ENCODE measurements at regions of chr22 and their contacts with region 1.

Region 1: DNA sequence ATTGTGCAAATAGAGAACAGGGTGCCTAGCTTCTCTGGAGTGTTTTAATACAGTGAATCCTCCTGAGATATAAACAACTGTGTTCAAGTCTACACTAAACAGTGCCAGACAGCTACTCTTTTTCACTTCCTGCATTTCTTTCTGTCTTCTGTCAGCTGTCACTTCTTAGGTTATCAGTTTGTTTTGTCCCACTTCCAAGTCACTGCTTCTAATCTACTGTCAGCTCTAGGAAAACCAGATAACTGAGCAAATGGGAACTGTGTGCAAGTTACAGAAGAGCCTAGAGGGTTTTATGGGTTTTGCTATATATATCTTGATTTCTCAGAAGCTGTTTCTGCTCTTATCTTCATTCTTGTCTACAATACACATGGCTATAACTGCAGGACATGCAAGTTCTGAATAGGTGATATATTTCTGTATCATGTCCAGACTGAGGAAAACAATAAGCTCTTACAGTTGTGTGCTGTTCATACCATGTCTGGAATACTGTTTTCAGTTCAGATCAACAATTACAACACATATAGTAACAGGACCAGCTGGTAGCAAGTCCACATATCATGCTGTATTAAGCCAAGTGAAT is 5.8 kb downstream of the PITPNB start:
- DNase-seq: no peak
- H3K4me3 ChIP-seq: no peak overlapping the region
- H3K27ac ChIP-seq: peak overlapping the region; percentile 4
- H3K4me1 ChIP-seq: peaks cover 35% of the 10 kb centered on the region
- H3K27me3 ChIP-seq: no peaks in the 10 kb centered on the region
- CTCF ChIP-seq: no peak

Region 2: DNA sequence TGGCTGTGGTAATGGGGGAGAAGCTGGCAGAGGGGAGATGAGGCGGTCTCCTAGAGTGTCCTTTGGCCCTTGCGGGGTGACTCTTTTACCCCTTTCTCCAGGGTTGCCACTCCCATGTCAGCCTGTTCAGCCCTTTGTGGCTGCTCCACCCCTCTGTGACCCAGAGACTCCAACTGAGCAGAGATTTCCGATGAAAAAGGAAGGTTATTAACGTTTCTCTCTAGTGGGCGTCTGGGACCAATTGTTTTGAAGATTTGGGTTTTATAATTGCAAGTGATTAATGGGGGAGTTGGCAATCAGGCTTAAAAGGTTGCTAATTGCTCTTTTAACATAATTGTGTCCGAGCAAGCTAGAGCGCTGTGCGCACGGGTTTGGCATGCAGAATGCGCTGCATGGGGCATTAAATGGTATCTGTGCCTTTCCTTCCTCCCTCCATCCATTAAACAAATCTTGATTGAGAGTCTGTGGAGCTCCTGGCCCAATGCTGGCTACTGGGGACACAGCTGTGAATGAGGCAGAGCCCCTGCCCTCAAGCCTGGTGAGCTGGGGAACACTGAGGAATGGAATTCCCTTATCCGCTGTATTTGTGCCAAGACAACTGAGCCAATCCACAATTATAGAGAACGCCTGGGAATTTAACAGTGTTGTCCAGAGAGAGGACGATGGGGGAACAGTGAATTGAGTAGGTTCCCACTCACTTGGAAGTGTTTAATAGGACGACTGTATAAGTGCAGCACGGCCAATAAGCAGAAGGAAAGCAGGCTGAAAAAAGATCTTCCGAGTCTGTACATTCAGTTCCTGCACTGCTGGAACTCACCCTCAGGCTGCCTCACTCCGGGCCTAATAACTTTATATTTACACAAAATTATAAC is 960.0 kb before region 1 on chr22:
- CTCF ChIA-PET with region 1: no interaction called
- POLR2A ChIA-PET with region 1: no interaction called
- intact Hi-C with region 1: no loop called
- DNase-seq: no peak
- H3K4me3 ChIP-seq: no peak overlapping the region
- H3K27ac ChIP-seq: no peak overlapping the region
- H3K4me1 ChIP-seq: peaks cover 5% of the 10 kb centered on the region
- H3K27me3 ChIP-seq: peaks cover 6% of the 10 kb centered on the region
- CTCF ChIP-seq: no peak

Region 3: DNA sequence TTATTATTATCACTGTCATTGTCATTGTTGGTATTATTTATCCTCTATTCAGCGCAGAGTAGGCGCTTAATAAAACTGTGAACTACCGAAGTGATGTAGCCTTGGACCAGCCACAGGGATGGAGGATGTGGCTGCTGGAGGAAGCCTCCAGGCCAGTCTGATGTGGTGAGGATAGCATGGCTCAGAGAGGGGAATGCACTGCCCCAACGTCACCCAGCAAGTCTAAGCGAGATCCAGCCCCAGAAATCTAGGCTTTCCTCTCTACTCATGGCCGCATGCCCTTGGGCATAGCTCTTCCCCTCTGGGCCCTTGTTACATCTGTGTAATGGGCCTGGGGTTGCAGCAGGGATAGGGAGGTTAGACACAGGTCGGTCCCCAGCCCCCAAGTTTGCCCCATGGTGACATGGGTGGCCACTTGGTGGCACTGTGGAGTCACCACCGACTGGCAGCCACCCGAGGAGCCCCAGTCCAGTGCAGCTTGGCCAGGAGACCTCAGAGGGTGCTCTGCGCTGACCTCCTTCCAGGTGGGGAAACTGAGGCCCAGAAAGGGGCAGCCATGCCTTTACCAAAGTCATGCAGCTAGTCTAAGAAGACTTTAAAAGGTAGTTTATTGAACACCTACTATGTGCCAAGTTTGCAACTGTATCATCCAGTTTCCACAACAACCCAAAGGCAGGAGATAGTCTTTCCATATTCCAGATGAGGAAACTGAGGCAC is 507.4 kb before region 1 on chr22:
- CTCF ChIA-PET with region 1: interaction called, 10 read pairs
- POLR2A ChIA-PET with region 1: no interaction called
- intact Hi-C with region 1: no loop called
- DNase-seq: peak; percentile 58
- H3K4me3 ChIP-seq: no peak overlapping the region
- H3K27ac ChIP-seq: no peak overlapping the region
- H3K4me1 ChIP-seq: peaks cover 16% of the 10 kb centered on the region
- H3K27me3 ChIP-seq: no peaks in the 10 kb centered on the region
- CTCF ChIP-seq: peak; percentile 78

Region 4: GRCh38 chr22:27438271-27438980 is 474.8 kb before region 1 on chr22:
- CTCF ChIA-PET with region 1: no interaction called
- POLR2A ChIA-PET with region 1: no interaction called
- intact Hi-C with region 1: no loop called
- DNase-seq: peak; percentile 71
- H3K4me3 ChIP-seq: no peak overlapping the region
- H3K27ac ChIP-seq: no peak overlapping the region
- H3K4me1 ChIP-seq: peaks cover 28% of the 10 kb centered on the region
- H3K27me3 ChIP-seq: no peaks in the 10 kb centered on the region
- CTCF ChIP-seq: no peak

Region 5: GRCh38 chr22:27790376-27791158 is 122.7 kb before region 1 on chr22:
- CTCF ChIA-PET with region 1: no interaction called
- POLR2A ChIA-PET with region 1: no interaction called
- intact Hi-C with region 1: no loop called
- DNase-seq: no peak
- H3K4me3 ChIP-seq: no peak overlapping the region
- H3K27ac ChIP-seq: no peak overlapping the region
- H3K4me1 ChIP-seq: peaks cover 37% of the 10 kb centered on the region
- H3K27me3 ChIP-seq: no peaks in the 10 kb centered on the region
- CTCF ChIP-seq: no peak

Region 6: GRCh38 chr22:27972732-27973698 is 59.8 kb after region 1 on chr22:
- CTCF ChIA-PET with region 1: no interaction called
- POLR2A ChIA-PET with region 1: no interaction called
- intact Hi-C with region 1: no loop called
- DNase-seq: no peak
- H3K4me3 ChIP-seq: no peak overlapping the region
- H3K27ac ChIP-seq: no peak overlapping the region
- H3K4me1 ChIP-seq: peaks cover 23% of the 10 kb centered on the region
- H3K27me3 ChIP-seq: peaks cover 5% of the 10 kb centered on the region
- CTCF ChIP-seq: no peak